ENCODE measurements at regions of chr7 and their contacts with region 1.

Region 1: DNA sequence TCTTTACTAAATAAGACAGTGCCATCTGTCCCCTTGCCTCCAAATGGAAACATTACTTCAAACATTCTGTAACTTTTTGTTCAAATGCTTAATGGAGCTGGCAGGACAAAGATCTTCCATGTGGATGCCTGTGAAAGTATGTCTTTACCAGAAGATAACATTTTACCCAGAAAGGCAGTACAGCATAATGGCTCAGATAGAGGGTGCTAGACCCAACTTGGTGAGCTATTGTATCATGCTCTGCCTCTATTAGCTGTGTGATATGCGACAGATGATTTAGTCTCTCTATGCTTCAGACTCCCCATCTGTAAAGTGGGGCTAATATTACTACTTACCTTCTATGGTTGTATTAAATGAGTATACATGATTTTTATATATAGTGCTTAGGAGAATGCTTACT is 8.8 kb upstream of the SMKR1 start:
- DNase-seq: no peak
- H3K4me3 ChIP-seq: no peak overlapping the region
- H3K27ac ChIP-seq: no peak overlapping the region
- H3K4me1 ChIP-seq: no peaks in the 10 kb centered on the region
- H3K27me3 ChIP-seq: no peaks in the 10 kb centered on the region
- CTCF ChIP-seq: peak in 1 of 2 donors; percentile 42

Region 2: GRCh38 chr7:129367700-129368388 is 125.7 kb before region 1 on chr7:
- CTCF ChIA-PET with region 1: no interaction called
- dilution Hi-C with region 1: no loop called
- in situ Hi-C with region 1: loop called in 1 of 2 experiments (anchors 10 kb)
- intact Hi-C with region 1: no loop called
- DNase-seq: peak; percentile 42
- H3K4me3 ChIP-seq: no peak overlapping the region
- H3K27ac ChIP-seq: no peak overlapping the region
- H3K4me1 ChIP-seq: no peaks in the 10 kb centered on the region
- H3K27me3 ChIP-seq: no peaks in the 10 kb centered on the region
- CTCF ChIP-seq: peak; percentile 82 to 89

Region 3: GRCh38 chr7:129576138-129576537 is 82.6 kb after region 1 on chr7:
- CTCF ChIA-PET with region 1: no interaction called
- dilution Hi-C with region 1: loop called (anchors 5 kb)
- in situ Hi-C with region 1: no loop called
- intact Hi-C with region 1: no loop called
- DNase-seq: no peak
- H3K4me3 ChIP-seq: no peak overlapping the region
- H3K27ac ChIP-seq: no peak overlapping the region
- H3K4me1 ChIP-seq: no peaks in the 10 kb centered on the region
- H3K27me3 ChIP-seq: no peaks in the 10 kb centered on the region
- CTCF ChIP-seq: no peak

Region 4: DNA sequence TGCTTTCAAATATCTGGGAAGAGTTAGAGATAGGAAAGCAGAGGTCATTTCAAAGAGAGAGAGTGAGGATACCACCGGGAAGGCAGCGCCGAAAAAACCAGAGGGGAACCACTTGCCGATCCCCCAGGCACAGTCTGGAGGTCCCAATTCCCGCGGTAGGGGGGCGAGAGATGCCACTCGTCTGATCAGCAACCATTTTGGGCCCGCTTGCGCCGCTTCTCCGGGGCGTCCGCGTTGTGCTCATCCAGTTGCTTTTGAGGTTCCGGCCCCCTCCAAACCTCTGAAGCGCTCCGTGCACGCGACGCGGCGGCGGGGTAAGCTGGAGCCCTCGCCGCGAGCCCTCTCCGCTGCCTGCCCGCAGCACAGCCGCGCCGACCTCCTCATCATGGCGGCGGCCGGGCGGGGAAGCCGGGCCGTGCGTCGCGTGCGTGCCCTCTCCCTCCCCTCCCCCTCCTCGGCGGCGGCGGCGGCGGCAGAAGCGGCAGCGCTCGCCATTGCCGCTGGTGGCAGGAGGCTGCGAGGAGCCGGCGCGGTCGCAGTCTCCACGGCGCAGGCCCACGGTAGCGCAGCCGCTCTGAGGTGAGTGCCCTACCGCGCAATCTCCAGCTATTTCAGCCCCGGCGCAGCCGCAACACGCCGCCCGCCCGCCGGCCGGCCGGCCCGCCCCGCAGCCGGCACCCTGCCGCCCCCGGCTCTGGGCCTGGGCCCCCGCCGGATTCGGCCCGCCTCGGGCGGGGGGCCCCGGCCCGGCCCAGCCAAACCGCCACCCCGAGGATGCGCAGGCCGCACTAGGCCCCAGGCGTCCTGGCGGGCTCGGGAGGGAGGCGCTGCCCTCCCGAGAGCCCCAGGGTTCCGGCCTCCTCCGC is 117.9 kb after region 1 on chr7 and contains the start of gene NRF1:
- CTCF ChIA-PET with region 1: no interaction called
- dilution Hi-C with region 1: no loop called
- in situ Hi-C with region 1: no loop called
- intact Hi-C with region 1: loop called (anchors 1 kb)
- DNase-seq: peak; percentile 90
- H3K4me3 ChIP-seq: peak within 1 kb of the TSS; percentile 77 to 95 (median 87)
- H3K27ac ChIP-seq: peak within 1 kb of the TSS; percentile 80
- H3K4me1 ChIP-seq: peaks cover 27% of the 10 kb centered on the region
- H3K27me3 ChIP-seq: no peaks in the 10 kb centered on the region
- CTCF ChIP-seq: peak in 1 of 2 donors; percentile 12
- total RNA-seq, gene NRF1: 11.3 to 14.3 TPM

Region 5: DNA sequence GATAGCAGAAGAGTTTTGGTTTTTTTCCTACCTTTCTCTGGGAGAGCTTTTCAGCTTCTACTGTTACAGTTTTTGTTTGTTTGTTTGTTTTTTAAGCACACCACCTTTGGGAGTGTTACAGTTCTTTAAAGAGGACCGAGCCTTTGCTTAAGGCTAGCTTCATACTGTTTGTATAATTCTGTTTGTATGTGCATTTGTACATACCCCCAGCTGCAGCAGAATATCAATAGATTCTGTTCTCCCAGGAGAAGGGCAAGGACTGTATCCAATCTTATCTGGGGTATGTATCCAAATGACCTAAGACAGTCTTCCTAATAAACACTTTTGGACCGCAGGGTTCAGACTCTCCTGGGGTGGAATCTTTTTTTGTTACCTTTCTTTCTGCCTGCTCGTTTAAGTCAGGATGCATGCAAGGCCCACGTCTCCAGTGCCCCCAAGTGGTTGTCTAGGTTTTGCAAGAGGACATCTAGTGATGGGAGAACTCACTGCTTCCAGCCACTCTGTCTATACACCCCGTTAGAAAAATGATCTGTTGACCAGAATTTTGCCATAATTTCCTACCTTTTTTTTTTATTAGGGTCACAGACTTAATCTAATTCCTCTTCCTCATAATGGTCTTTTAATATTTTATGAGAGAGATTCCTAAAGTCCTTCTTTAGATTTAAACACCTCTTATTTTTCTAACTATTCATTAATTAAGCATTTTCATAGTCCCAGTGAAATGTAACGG is 141.9 kb after region 1 on chr7:
- CTCF ChIA-PET with region 1: no interaction called
- dilution Hi-C with region 1: loop called (anchors 5 kb)
- in situ Hi-C with region 1: no loop called
- intact Hi-C with region 1: no loop called
- DNase-seq: peak; percentile 62
- H3K4me3 ChIP-seq: no peak overlapping the region
- H3K27ac ChIP-seq: no peak overlapping the region
- H3K4me1 ChIP-seq: no peaks in the 10 kb centered on the region
- H3K27me3 ChIP-seq: no peaks in the 10 kb centered on the region
- CTCF ChIP-seq: peak; percentile 82 to 93